Pancreas (tissue), 10 donors: ENCODE measurements at regions of chr15 and their contacts with region 1.

Region 1: GRCh38 chr15:66851226-66852071 is 149.4 kb downstream of the SMAD6 start:
- DNase-seq: peak; percentile 71 to 92 (median 84)
- ATAC-seq: peak; percentile 93 to 98 (median 96)
- H3K4me3 ChIP-seq: no peak overlapping the region
- H3K27ac ChIP-seq: no peak overlapping the region
- H3K4me1 ChIP-seq: no peaks in the 10 kb centered on the region
- H3K27me3 ChIP-seq: no peaks in the 10 kb centered on the region
- CTCF ChIP-seq: peak; percentile 97 to 98 (median 97)

Region 2: GRCh38 chr15:66603301-66604179 is 247.9 kb before region 1 on chr15:
- intact Hi-C with region 1: loop called in 2 of 3 experiments (anchors 5 kb)
- DNase-seq: peak; percentile 36 to 87 (median 66)
- ATAC-seq: peak; percentile 56 to 97 (median 90)
- H3K4me3 ChIP-seq: no peak overlapping the region
- H3K27ac ChIP-seq: no peak overlapping the region
- H3K4me1 ChIP-seq: no peaks in the 10 kb centered on the region
- H3K27me3 ChIP-seq: no peaks in the 10 kb centered on the region
- CTCF ChIP-seq: peak; percentile 52 to 72 (median 61)

Region 3: DNA sequence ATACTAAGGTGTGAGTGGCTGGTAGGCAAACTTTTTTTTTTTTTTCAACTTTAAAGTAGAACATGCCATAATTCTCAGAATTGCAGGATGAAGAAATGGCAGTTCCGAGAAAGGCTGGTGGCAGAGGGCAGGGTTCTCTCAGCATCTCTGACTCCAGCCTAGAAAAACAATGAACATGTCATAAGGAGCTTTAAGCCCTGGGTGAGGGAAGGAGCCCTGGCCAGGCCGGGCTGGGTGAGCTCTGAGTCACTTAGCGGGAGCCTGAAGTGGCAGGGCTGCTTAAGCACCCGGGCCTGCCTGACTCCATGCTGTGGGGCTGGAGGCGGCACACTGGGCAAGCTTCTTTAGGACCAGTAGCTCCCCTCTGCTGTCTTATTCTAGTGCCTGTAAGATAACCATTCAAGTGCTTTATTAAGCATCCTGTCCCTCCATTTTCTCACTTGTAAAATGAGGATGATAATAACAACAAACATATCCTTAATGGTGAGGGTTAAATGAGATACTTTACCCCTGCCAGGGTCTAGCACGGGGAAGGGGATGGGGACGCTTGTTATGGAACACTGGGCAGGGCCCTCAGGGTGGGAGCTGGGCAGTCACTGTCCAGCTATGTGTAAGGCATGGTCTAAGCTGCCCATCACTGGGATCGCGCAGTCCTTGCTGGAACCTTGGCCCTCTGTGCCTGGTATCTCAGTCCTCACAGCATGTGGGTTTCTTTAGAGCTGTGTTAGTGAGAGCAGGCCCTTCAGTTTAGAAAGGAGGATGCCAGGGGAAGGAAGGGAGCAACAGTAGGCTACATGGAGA is 131.0 kb before region 1 on chr15:
- intact Hi-C with region 1: no loop called
- DNase-seq: peak in 1 of 6 donors; percentile 27
- ATAC-seq: peak in 2 of 4 donors; percentile 28 to 36
- H3K4me3 ChIP-seq: no peak overlapping the region
- H3K27ac ChIP-seq: no peak overlapping the region
- H3K4me1 ChIP-seq: peaks cover 1 to 3% (median 3%) of the 10 kb centered on the region in 3 donors
- H3K27me3 ChIP-seq: no peaks in the 10 kb centered on the region
- CTCF ChIP-seq: no peak

Region 4: DNA sequence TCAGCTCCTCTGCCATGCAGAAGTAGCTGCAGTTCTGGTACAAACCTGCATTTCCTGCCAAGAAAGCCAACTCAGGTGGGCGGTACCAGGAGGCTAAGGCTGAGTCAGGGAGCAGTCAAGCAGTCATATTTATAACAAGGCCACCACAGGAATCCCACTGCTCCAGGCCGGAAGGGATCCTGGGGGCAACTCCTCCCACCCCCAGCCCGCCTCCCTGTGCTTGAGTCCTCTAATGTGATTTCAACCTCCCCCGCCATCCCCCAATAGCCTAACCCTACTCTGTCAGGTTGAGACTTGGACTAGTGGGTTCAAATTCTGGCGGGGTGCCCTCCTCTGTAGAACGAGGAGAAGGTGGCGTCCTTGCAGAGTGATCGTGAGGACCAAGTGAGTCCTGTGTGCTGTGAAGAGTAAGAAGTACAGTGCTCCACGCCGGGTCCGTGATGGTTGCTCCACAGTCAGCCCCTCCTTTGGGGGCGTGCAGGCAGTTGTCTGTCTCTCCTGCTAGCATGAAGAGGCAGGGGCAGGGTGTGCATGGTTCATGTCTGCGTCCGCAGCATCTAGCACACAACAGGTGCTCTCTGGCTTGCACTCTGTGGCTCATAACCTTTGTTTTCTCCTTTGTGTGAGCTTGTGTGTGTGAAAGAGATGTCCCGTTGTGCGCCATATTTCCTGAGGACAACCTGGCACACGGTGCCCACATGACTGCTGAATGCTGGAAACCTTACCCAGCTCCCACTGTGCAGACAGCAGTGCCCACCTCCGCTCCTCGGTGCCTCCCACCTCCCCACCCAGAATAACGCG is 71.1 kb before region 1 on chr15:
- intact Hi-C with region 1: loop called in 2 of 3 experiments (anchors 5 to 10 kb)
- DNase-seq: peak in 1 of 6 donors; percentile 16
- ATAC-seq: peak; percentile 44 to 61 (median 46)
- H3K4me3 ChIP-seq: no peak overlapping the region
- H3K27ac ChIP-seq: peak overlapping the region in 2 of 4 donors; percentile 5 to 29
- H3K4me1 ChIP-seq: peaks cover 6 to 11% (median 9%) of the 10 kb centered on the region in 3 donors
- H3K27me3 ChIP-seq: no peaks in the 10 kb centered on the region
- CTCF ChIP-seq: no peak

Region 5: DNA sequence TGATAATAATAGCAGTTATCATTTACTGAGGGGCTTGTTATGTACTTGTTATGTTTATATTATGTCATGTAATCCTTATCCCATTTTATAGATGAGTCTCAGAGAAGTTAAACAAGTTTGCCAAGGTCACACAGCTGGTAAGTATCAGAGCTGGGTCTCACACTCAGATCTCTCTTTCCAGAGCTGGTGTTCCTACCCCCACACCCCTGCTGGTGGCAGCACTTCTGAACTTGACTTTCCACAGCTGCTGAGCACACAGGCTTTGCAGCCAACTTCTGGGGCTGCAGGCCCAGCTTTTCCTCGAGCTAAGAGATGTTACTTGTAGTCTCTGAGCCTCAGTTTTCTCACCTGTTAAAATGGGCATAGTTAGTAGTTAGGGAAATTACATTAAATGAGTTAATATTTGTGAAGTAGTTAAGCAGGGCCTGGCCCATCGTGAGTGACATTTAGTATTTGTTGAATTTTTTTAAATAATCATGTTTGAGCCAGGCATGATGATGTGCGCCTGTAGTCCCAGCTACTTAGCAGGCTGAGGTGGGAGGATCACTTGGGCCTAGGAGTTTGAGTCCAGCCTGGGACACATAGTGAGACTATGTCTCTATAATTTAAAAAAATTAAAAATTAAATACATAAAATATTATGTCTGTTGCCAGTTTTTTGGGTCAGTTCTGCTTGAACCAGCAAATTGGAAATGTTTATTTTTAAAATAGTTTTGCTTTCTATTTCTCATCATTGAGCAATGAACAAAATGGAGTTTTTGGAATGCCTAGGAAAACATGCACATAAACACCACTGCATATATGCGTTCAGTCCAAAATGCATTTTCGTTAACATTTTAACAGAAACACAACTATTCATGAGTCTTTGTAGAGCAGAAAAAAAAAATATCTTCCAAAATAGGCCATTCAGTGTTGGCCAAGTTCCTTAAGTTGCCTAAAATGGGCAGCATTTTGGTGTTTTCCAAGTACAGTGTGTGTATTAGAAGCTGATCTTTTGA is 62.1 kb before region 1 on chr15:
- intact Hi-C with region 1: loop called in 2 of 3 experiments (anchors 5 to 10 kb)
- DNase-seq: peak in 2 of 6 donors; percentile 32 to 58
- ATAC-seq: peak; percentile 72 to 95 (median 90)
- H3K4me3 ChIP-seq: no peak overlapping the region
- H3K27ac ChIP-seq: no peak overlapping the region
- H3K4me1 ChIP-seq: no peaks in the 10 kb centered on the region
- H3K27me3 ChIP-seq: no peaks in the 10 kb centered on the region
- CTCF ChIP-seq: peak in 1 of 4 donors; percentile 32

Region 6: DNA sequence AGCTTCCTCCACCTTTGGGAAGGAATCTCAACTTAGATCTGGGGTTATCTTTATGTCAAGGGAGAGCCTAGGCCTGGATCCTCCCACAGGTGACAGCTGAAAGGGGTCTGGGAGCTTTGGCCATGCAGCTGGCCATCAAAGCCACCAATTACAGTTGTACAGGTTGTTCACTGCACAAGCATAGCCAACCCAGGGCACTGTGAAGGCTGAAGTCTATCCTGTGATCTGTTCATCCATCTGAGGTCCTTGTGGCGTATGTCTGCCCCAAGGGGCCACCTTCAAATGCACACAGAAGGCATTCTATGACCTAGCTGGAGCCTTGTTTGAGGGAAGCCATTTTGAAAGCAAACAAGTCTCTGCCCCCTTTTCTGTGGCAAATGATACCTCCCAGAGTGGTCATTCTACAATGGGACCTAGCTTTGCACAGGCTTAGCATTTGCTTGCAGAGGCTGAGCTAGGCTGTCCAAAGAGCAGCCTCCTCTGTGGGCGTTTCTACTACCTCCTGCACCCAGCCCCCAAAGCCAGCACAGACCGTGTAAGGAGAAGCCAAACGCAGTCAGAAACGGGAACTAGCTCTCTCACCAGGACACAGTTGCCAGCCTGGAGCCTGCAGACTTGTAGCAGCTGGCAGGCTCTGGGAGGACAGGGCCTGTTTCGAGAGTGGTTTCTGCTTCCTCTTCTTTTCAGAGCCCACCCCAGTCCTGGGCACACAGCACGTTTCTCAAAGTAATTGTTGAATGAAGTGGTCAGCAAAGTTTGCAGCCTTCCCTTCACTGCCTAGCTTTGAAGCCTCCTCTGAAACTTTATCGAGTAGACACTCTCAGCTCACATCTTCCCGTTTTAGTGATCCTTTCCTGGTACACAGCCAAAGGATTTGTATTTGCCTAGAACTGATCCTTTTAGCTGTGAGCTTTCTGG is 56.6 kb after region 1 on chr15:
- intact Hi-C with region 1: no loop called
- DNase-seq: peak in 1 of 6 donors; percentile 53
- ATAC-seq: peak in 3 of 4 donors; percentile 45 to 75 (median 67)
- H3K4me3 ChIP-seq: no peak overlapping the region
- H3K27ac ChIP-seq: no peak overlapping the region
- H3K4me1 ChIP-seq: no peaks in the 10 kb centered on the region
- H3K27me3 ChIP-seq: no peaks in the 10 kb centered on the region
- CTCF ChIP-seq: no peak

Region 7: GRCh38 chr15:67059127-67059553 is 207.7 kb after region 1 on chr15:
- intact Hi-C with region 1: no loop called
- DNase-seq: peak; percentile 82 to 91 (median 88)
- ATAC-seq: peak; percentile 82 to 87 (median 86)
- H3K4me3 ChIP-seq: peak overlapping the region in 2 of 4 donors; percentile 34 to 37
- H3K27ac ChIP-seq: peak overlapping the region in 3 of 4 donors; percentile 39 to 57 (median 55)
- H3K4me1 ChIP-seq: peaks cover 26 to 38% (median 34%) of the 10 kb centered on the region in 3 donors
- H3K27me3 ChIP-seq: no peaks in the 10 kb centered on the region
- CTCF ChIP-seq: no peak